Activated B cell treated with CpG ODN at 0.5 μM for 24 hours (primary cell): ENCODE measurements at regions of chr5 and their contacts with region 1.

Region 1: DNA sequence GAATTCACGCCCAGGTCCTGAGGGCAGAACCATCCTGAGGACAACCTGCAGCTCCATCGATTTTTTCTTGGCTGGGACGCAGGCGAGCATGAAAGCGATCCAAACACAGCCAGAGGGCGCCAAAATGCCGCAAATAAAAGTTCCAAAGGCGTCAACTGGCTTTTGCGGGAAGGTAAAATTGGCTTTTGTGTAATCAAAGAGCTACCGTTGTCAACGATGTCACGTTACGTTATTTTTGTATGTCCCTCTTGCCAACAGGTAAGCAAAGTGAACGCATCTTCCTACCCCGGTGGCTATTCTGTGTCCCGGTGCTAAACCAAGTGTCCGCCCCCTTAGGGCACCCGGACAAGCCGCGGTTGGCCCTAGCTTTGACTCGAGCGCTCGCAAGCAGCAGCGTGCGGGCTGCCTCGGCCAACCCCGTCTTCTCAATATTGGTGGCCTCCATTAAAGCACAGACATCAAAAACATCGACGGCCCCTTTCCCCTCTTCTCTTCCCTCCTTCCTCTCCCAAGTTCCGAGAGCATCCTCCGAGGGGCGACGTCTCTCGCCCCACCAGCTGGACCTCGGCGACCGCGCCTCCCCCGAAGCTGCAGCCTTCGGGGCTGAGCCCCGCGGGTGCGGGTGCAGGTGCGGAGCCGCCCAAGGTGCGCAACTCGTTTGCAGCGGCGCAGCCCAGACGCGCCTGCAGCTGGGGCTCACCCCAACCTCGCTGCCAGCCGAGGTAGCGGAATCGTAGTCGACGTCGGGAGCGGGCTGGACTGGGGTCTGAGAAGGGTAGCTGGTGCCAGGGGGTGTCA is 1.1 kb upstream of the BASP1 start:
- DNase-seq: peak; percentile 69
- ATAC-seq: peak; percentile 41
- H3K4me3 Mint-ChIP-seq: peak overlapping the region; percentile 94
- H3K27ac Mint-ChIP-seq: peak overlapping the region; percentile 97
- H3K4me1 Mint-ChIP-seq: peaks cover 59% of the 10 kb centered on the region
- H3K27me3 Mint-ChIP-seq: no peaks in the 10 kb centered on the region
- CTCF ChIP-seq: peak; percentile 65

Region 2: DNA sequence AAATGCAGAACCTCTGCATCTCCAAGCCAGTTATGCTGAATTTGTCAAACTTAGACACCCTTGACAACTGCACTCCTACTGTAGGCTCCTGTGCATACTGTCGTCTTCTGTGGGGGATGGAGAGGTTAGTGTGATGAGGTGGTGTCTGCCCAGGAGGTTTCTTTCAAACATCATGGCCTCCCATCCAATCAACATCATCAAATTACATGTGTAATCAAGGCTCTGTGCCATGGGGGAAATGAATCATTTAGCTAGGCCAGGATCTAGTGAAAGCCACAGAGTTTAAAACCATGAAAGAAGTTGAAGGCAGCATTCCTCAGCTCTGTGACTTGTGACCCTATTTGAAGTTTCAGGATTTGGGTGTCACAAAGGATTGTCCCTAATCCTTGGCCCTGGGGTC is 1277.4 kb before region 1 on chr5:
- CTCF ChIA-PET with region 1: no interaction called
- POLR2A ChIA-PET with region 1: no interaction called
- intact Hi-C with region 1: no loop called
- DNase-seq: no peak
- ATAC-seq: no peak
- H3K4me3 Mint-ChIP-seq: no peak overlapping the region
- H3K27ac Mint-ChIP-seq: no peak overlapping the region
- H3K4me1 Mint-ChIP-seq: no peaks in the 10 kb centered on the region
- H3K27me3 Mint-ChIP-seq: no peaks in the 10 kb centered on the region
- CTCF ChIP-seq: no peak

Region 3: DNA sequence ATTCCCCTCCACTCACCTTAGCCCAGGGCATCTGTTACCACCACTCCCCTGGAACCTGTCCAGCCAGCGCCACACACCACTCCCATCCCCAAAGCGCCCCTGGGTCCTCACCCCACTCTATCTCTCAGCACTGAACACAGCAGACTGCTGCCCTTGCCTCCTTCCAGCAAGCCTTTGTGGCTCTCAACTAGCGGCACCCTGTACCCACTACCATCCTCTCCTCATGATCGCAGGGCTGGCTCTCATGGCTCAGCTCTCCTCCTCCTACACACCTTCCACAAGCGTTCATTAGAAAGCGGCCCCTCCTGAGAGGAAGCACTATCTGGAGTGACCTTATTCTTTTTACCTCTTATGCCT is 12.3 kb before region 1 on chr5:
- CTCF ChIA-PET with region 1: interaction called, 30 read pairs
- POLR2A ChIA-PET with region 1: no interaction called
- intact Hi-C with region 1: no loop called
- DNase-seq: no peak
- ATAC-seq: no peak
- H3K4me3 Mint-ChIP-seq: no peak overlapping the region
- H3K27ac Mint-ChIP-seq: no peak overlapping the region
- H3K4me1 Mint-ChIP-seq: no peaks in the 10 kb centered on the region
- H3K27me3 Mint-ChIP-seq: no peaks in the 10 kb centered on the region
- CTCF ChIP-seq: no peak

Region 4: GRCh38 chr5:17282283-17283120 is 66.1 kb after region 1 on chr5:
- CTCF ChIA-PET with region 1: interaction called, 20 read pairs
- POLR2A ChIA-PET with region 1: interaction called, 69 read pairs
- intact Hi-C with region 1: loop called (anchors 1 kb)
- DNase-seq: peak; percentile 52
- ATAC-seq: peak; percentile 76
- H3K4me3 Mint-ChIP-seq: peak overlapping the region; percentile 81
- H3K27ac Mint-ChIP-seq: peak overlapping the region; percentile 95
- H3K4me1 Mint-ChIP-seq: peaks cover 71% of the 10 kb centered on the region
- H3K27me3 Mint-ChIP-seq: no peaks in the 10 kb centered on the region
- CTCF ChIP-seq: no peak

Region 5: GRCh38 chr5:17463653-17464052 is 247.3 kb after region 1 on chr5:
- CTCF ChIA-PET with region 1: interaction called, 9 read pairs
- POLR2A ChIA-PET with region 1: interaction called, 16 read pairs
- intact Hi-C with region 1: loop called (anchors 1 kb)
- DNase-seq: no peak
- ATAC-seq: no peak
- H3K4me3 Mint-ChIP-seq: no peak overlapping the region
- H3K27ac Mint-ChIP-seq: no peak overlapping the region
- H3K4me1 Mint-ChIP-seq: no peaks in the 10 kb centered on the region
- H3K27me3 Mint-ChIP-seq: peaks cover 4% of the 10 kb centered on the region
- CTCF ChIP-seq: no peak

Region 6: DNA sequence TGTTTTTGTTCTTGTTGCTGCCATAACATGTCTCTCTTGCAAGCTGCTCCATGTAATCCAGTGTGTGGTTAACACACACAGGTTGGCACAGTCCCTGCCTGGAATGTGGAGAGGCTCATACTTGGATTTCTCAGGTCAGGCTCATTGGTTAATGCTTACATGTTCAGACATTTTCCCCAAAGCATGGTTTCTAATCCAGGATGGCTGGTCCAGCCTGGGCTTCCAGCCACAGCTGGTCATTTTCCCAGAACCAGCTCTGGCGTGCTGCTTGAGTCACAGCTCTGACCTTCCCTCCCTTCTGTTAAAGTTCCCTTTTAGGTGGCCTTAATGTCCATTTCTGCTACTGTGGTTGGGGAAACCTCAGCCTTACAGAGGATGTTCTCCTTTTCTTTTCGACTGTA is 712.2 kb after region 1 on chr5:
- CTCF ChIA-PET with region 1: interaction called, 3 read pairs
- POLR2A ChIA-PET with region 1: interaction called, 17 read pairs
- intact Hi-C with region 1: no loop called
- DNase-seq: no peak
- ATAC-seq: no peak
- H3K4me3 Mint-ChIP-seq: no peak overlapping the region
- H3K27ac Mint-ChIP-seq: no peak overlapping the region
- H3K4me1 Mint-ChIP-seq: no peaks in the 10 kb centered on the region
- H3K27me3 Mint-ChIP-seq: no peaks in the 10 kb centered on the region
- CTCF ChIP-seq: no peak

Region 7: DNA sequence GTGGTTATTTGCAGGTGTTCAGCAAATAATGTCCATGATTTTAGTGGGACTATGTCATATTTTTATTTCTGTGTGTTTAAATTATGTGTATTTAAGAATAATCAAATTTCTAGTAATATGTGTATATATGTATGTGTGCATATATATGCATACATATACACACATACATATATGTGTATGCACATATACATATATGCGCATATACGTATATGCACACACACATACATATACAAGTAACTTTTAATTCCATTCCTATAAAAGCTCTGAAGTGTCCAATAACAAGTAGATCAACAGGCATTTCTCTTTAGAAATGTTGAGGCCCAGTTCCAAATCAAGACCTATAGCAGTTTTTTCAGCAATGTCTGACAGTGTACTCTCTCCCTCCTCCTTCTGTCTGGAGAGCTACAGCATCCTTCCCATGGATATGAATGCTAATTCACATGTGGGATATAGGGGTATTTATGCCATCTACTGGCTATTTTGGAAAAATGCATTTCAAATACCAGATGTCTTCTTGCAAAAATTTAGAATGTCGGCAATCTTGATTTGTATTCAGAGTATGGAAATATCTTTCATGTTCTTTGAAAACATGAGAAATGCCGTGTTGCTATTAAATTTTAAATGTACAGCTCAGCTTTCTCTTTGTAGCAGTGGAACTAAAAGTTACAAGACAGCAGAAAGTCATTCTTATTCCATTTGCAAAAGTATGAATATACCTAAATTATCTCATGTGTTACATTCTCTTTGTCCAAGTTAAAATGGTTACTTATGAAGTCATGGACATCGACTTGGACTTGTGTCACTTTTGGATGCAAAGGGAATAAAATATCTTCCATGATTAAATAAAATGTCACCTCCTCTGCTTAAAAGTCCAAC is 1065.5 kb after region 1 on chr5:
- CTCF ChIA-PET with region 1: interaction called, 46 read pairs
- POLR2A ChIA-PET with region 1: interaction called, 4 read pairs
- intact Hi-C with region 1: no loop called
- DNase-seq: no peak
- ATAC-seq: peak; percentile 28
- H3K4me3 Mint-ChIP-seq: no peak overlapping the region
- H3K27ac Mint-ChIP-seq: no peak overlapping the region
- H3K4me1 Mint-ChIP-seq: no peaks in the 10 kb centered on the region
- H3K27me3 Mint-ChIP-seq: no peaks in the 10 kb centered on the region
- CTCF ChIP-seq: no peak

Region 8: GRCh38 chr5:18745646-18746615 is 1529.6 kb after region 1 on chr5:
- CTCF ChIA-PET with region 1: no interaction called
- POLR2A ChIA-PET with region 1: no interaction called
- intact Hi-C with region 1: loop called (anchors 2 kb)
- DNase-seq: no peak
- ATAC-seq: peak; percentile 79
- H3K4me3 Mint-ChIP-seq: peak overlapping the region; percentile 94
- H3K27ac Mint-ChIP-seq: peak overlapping the region; percentile 95
- H3K4me1 Mint-ChIP-seq: peaks cover 60% of the 10 kb centered on the region
- H3K27me3 Mint-ChIP-seq: no peaks in the 10 kb centered on the region
- CTCF ChIP-seq: no peak